Left cardiac atrium (tissue), 4 donors: ENCODE measurements at regions of chr3 and their contacts with region 1.

Region 1: DNA sequence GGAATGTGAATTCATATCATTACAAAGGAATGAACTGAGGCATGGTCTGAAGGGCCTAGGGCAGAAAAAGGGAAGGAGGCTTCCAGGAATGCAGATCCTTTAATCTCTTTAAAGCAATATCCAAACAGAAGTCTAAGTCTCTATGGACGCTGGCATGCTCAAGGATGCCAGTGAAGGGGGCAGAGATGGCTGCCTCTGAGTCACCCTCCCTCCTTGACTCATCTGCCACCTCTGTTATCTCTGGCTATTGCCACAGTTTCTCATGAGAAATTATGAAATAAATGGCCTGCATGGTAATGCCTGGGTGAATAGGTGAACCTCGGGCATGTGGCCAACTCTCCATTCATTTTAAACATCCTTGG is 96.3 kb upstream of the BCL6 start:
- DNase-seq: no peak
- ATAC-seq: peak in 1 of 2 donors; percentile 73

Region 2: GRCh38 chr3:187802928-187803259 is 38.7 kb before region 1 on chr3:
- intact Hi-C with region 1: loop called in 1 of 2 experiments (anchors 5 kb)
- DNase-seq: no peak
- ATAC-seq: no peak